CD4-positive, alpha-beta T cell (primary cell): ENCODE measurements at regions of chr2 and their contacts with region 1.

Region 1: GRCh38 chr2:119011162-119011909 is 69.3 kb downstream of the MARCO start:
- DNase-seq: peak in 2 of 14 experiments; percentile 26 to 31
- ATAC-seq: no peak
- H3K4me3 ChIP-seq: no peak overlapping the region
- H3K4me3 Mint-ChIP-seq: no peak overlapping the region
- H3K27ac ChIP-seq: no peak overlapping the region
- H3K27ac Mint-ChIP-seq: no peak overlapping the region
- H3K4me1 ChIP-seq: no peaks in the 10 kb centered on the region
- H3K4me1 Mint-ChIP-seq: peaks cover 4% of the 10 kb centered on the region
- H3K27me3 ChIP-seq: peaks cover 12 to 13% of the 10 kb centered on the region in 2 experiments
- H3K27me3 Mint-ChIP-seq: peaks cover 34% of the 10 kb centered on the region
- CTCF ChIP-seq: no peak

Region 2: GRCh38 chr2:118902266-118903028 is 108.9 kb before region 1 on chr2:
- CTCF ChIA-PET with region 1: no interaction called
- POLR2A ChIA-PET with region 1: no interaction called
- intact Hi-C with region 1: no loop called
- DNase-seq: peak in 4 of 14 experiments; percentile 8 to 36 (median 33)
- ATAC-seq: peak; percentile 52
- H3K4me3 ChIP-seq: no peak overlapping the region
- H3K4me3 Mint-ChIP-seq: peak overlapping the region; percentile 59
- H3K27ac ChIP-seq: peak overlapping the region in 1 of 2 donors; percentile 29
- H3K27ac Mint-ChIP-seq: peak overlapping the region; percentile 74
- H3K4me1 ChIP-seq: peaks cover 25% of the 10 kb centered on the region
- H3K4me1 Mint-ChIP-seq: peaks cover 32% of the 10 kb centered on the region
- H3K27me3 ChIP-seq: no peaks in the 10 kb centered on the region
- H3K27me3 Mint-ChIP-seq: no peaks in the 10 kb centered on the region
- CTCF ChIP-seq: no peak

Region 3: GRCh38 chr2:119174216-119175037 is 163.1 kb after region 1 on chr2:
- CTCF ChIA-PET with region 1: no interaction called
- POLR2A ChIA-PET with region 1: no interaction called
- intact Hi-C with region 1: loop called in 1 of 2 experiments (anchors 5 kb)
- DNase-seq: peak; percentile 22 to 69 (median 48)
- ATAC-seq: peak; percentile 59
- H3K4me3 ChIP-seq: no peak overlapping the region
- H3K4me3 Mint-ChIP-seq: no peak overlapping the region
- H3K27ac ChIP-seq: no peak overlapping the region
- H3K27ac Mint-ChIP-seq: no peak overlapping the region
- H3K4me1 ChIP-seq: peaks cover 2% of the 10 kb centered on the region
- H3K4me1 Mint-ChIP-seq: no peaks in the 10 kb centered on the region
- H3K27me3 ChIP-seq: no peaks in the 10 kb centered on the region
- H3K27me3 Mint-ChIP-seq: peaks cover under 1% of the 10 kb centered on the region
- CTCF ChIP-seq: peak; percentile 90

Region 4: GRCh38 chr2:119264781-119265692 is 253.7 kb after region 1 on chr2:
- CTCF ChIA-PET with region 1: no interaction called
- POLR2A ChIA-PET with region 1: no interaction called
- intact Hi-C with region 1: loop called in 1 of 2 experiments (anchors 5 kb)
- DNase-seq: peak in 7 of 14 experiments; percentile 8 to 37 (median 15)
- ATAC-seq: no peak
- H3K4me3 ChIP-seq: no peak overlapping the region
- H3K4me3 Mint-ChIP-seq: no peak overlapping the region
- H3K27ac ChIP-seq: no peak overlapping the region
- H3K27ac Mint-ChIP-seq: no peak overlapping the region
- H3K4me1 ChIP-seq: no peaks in the 10 kb centered on the region
- H3K4me1 Mint-ChIP-seq: no peaks in the 10 kb centered on the region
- H3K27me3 ChIP-seq: peaks cover 0 to 2% of the 10 kb centered on the region in 2 experiments
- H3K27me3 Mint-ChIP-seq: peaks cover 12% of the 10 kb centered on the region
- CTCF ChIP-seq: peak; percentile 57